MCF 10A (cell line): ENCODE measurements at regions of chr9 and their contacts with region 1.

Region 1: DNA sequence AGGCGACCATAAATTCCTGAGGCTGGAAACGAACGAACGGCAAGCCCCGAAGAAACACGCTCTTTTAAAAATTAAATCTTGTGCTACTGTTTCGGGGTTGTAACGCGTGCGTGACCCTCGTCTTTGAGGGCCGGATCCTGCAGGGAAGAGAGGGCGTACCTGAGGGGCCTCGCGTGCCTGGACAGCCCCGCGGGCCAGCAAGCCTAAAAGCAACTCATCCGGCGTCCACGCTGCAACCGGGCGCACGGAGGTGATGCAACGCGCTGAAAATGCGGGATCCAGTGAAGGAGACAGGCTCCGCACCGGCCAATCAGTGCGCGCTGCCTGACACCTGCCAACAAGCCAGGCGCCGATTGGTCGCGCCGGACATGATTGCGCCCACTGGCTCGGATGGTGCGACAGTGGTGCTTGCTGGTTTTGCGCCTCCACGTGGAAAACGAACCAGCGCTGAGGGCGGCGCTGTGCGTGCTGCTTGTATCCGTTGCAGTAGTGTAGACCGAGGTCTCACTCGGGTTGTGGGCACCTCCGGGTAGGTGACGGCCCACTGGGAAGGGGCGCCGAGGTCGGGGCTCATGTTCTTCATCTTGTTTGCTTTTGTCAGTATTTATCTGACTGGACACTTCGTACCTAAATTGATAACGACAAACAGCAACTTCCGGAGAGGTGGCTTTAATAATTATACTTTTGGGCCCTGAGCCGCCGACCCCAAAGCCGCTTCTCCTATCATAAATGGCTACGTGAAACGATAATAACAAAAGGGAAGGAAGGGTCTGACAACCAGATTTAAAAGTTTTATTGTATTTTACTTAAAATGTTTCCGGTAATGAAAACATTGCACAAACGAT is at the start of gene IARS1:
- DNase-seq: peak; percentile 98
- H3K4me3 Mint-ChIP-seq: peak within 1 kb of the TSS; percentile 80
- H3K27ac Mint-ChIP-seq: peak within 1 kb of the TSS; percentile 96
- H3K4me1 Mint-ChIP-seq: peaks cover 27% of the 10 kb centered on the region
- H3K27me3 Mint-ChIP-seq: no peaks in the 10 kb centered on the region
- CTCF ChIP-seq: no peak
- total RNA-seq, gene IARS1: 390 and 403 TPM in 2 replicates

Region 2: DNA sequence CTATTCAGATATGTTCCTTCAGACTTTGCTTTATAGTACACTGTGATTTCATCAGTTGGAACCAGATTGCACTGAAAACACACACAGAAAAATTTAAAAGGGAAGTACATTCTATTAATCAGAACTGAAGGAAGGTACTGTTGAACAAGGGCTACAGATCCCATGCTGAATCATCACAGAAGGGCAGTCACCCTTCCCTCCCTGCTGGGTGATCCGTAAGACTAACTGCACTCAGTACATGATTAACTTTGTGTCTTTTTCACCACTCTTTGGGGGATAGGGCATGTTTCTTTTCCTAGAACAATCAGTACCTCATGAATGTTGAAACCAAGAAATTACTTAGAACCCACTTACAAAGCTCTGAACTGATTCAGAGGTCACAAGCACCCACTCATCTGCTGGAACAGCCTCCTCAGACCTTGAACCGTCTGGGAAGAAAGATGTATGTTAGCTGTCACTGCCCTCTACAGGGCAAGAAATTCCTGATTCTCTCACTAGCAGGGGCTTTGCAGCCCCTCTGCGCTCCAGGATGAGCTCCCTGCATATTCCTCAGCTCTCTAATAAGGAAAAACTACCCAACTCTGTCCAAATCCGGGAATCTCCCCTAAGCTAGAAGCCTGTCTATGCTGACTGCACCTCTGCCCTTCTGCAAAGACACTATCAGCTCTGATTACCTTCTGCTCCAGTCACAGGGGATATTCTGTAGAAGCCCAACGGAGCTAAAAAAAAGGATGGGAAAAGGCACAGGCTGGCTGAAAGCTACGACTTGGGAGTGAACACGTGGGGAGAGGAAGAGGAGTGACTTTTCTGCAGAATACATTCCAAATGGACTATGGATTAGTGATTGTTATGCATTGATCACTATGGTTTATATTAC is 51.2 kb before region 1 on chr9:
- CTCF ChIA-PET with region 1: no interaction called
- POLR2A ChIA-PET with region 1: interaction called, 3 read pairs
- intact Hi-C with region 1: loop called (anchors 5 kb)
- DNase-seq: no peak
- H3K4me3 Mint-ChIP-seq: no peak overlapping the region
- H3K27ac Mint-ChIP-seq: peak overlapping the region; percentile 47
- H3K4me1 Mint-ChIP-seq: peaks cover 23% of the 10 kb centered on the region
- H3K27me3 Mint-ChIP-seq: no peaks in the 10 kb centered on the region
- CTCF ChIP-seq: peak; percentile 14

Region 3: DNA sequence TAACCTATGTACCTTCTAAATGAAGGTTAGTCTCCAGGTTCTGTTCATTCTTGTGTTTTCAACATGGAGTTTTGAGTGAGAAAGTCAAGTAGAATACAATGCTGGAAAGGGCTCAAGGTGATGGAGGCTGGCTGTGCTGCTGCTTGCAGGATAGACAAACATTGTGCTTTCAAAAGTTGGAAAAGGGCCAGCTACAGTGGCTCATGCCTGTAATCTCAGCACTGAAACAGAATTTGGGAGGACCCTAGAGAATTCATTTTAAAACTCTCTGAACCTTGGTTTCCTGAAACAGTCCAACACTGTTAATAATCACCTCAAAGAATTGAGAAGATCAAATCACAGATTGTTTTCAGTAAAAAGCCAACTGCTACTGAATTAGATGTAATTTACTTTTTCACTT is 15.2 kb after region 1 on chr9:
- CTCF ChIA-PET with region 1: interaction called, 3 read pairs
- POLR2A ChIA-PET with region 1: interaction called, 12 read pairs
- intact Hi-C with region 1: no loop called
- DNase-seq: no peak
- H3K4me3 Mint-ChIP-seq: no peak overlapping the region
- H3K27ac Mint-ChIP-seq: no peak overlapping the region
- H3K4me1 Mint-ChIP-seq: peaks cover 13% of the 10 kb centered on the region
- H3K27me3 Mint-ChIP-seq: no peaks in the 10 kb centered on the region
- CTCF ChIP-seq: no peak

Region 4: DNA sequence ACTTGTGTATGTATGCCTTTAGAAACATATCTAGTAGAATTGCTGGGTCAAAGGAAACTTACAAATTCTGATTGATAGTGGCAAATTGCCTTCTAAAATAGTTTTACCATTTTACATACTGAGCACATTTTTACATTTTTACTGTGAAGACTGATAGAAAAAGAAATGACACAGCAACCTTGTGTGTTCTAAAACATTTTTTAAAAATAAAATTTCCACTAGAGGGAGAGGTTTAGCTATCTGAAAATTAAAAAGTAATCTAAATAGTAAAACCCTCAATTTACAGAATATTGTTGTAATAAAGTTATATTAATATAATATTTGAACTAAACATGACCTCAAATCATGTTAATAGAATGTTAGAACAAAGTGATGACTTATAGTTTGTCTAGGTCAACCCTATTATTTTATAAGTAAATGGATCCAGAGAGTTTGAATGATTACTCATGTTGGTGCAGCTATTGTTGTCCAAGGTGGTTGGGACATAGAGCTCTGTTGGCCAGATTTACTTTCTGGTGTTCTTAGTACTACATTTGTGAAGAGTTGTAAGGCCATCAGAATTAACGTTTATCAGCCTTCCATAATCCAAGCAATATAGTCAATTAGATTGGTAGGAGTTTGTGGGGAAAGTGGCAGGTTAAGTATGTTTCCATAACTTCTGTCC is 49.3 kb after region 1 on chr9:
- CTCF ChIA-PET with region 1: no interaction called
- POLR2A ChIA-PET with region 1: no interaction called
- intact Hi-C with region 1: no loop called
- DNase-seq: no peak
- H3K4me3 Mint-ChIP-seq: no peak overlapping the region
- H3K27ac Mint-ChIP-seq: peak overlapping the region; percentile 48
- H3K4me1 Mint-ChIP-seq: no peaks in the 10 kb centered on the region
- H3K27me3 Mint-ChIP-seq: no peaks in the 10 kb centered on the region
- CTCF ChIP-seq: peak; percentile 32